ENCODE measurements at regions of chr3 and their contacts with region 1.

Region 1: GRCh38 chr3:189272504-189273119 is 100.8 kb downstream of the TPRG1 start:
- DNase-seq: peak in 3 of 35 experiments; percentile 6 to 44 (median 7)
- ATAC-seq: peak; percentile 48 to 56 (median 50)
- H3K4me3 ChIP-seq: no peak overlapping the region
- H3K4me3 Mint-ChIP-seq: no peak overlapping the region
- H3K27ac ChIP-seq: no peak overlapping the region
- H3K27ac Mint-ChIP-seq: peak overlapping the region in 1 of 2 donors; percentile 5
- H3K4me1 ChIP-seq: peaks cover 5 to 32% of the 10 kb centered on the region in 2 experiments
- H3K4me1 Mint-ChIP-seq: peaks cover 21 to 36% (median 24%) of the 10 kb centered on the region in 3 donors
- H3K27me3 ChIP-seq: no peaks in the 10 kb centered on the region
- H3K27me3 Mint-ChIP-seq: no peaks in the 10 kb centered on the region

Region 2: GRCh38 chr3:189458532-189458931 is 185.9 kb after region 1 on chr3:
- CTCF ChIA-PET with region 1: no interaction called
- POLR2A ChIA-PET with region 1: interaction called in 1 of 2 experiments, 19 read pairs
- DNase-seq: no peak
- ATAC-seq: no peak
- H3K4me3 ChIP-seq: no peak overlapping the region
- H3K4me3 Mint-ChIP-seq: no peak overlapping the region
- H3K27ac ChIP-seq: no peak overlapping the region
- H3K27ac Mint-ChIP-seq: no peak overlapping the region
- H3K4me1 ChIP-seq: no peaks in the 10 kb centered on the region
- H3K4me1 Mint-ChIP-seq: no peaks in the 10 kb centered on the region
- H3K27me3 ChIP-seq: no peaks in the 10 kb centered on the region
- H3K27me3 Mint-ChIP-seq: no peaks in the 10 kb centered on the region

Measured in T-cell (primary cell).